GM10248 (cell line): ENCODE measurements at regions of chr15 and their contacts with region 1.

Region 1: GRCh38 chr15:58240221-58240932 is 102.2 kb downstream of the AQP9 start:
- DNase-seq: no peak
- CTCF ChIP-seq: no peak

Region 2: GRCh38 chr15:58252586-58253323 is 12.4 kb after region 1 on chr15:
- CTCF ChIA-PET with region 1: interaction called, 10 read pairs
- POLR2A ChIA-PET with region 1: no interaction called
- DNase-seq: no peak
- CTCF ChIP-seq: no peak

Region 3: DNA sequence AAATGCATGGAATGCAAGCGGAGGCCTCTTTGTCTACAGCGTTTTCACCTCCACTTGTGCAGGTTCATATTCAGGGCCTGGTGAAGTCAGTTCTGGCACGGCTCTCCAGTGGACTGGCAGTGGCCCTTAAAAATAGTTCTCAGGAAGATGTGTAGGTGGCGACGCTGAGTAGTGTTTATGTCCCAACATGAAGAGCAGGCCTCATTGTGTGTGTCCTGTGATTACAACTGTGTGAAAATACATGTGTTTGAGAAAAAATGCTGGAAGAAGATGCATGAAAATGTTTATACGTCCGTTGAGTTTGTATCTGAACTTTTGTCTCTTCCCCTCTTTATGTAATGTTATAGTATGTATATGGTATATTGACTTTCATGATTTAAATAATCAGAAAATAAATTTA is 198.6 kb after region 1 on chr15:
- CTCF ChIA-PET with region 1: no interaction called
- POLR2A ChIA-PET with region 1: no interaction called
- DNase-seq: peak; percentile 56
- CTCF ChIP-seq: peak; percentile 17